ENCODE measurements at regions of chr6 and their contacts with region 1.

Region 1: DNA sequence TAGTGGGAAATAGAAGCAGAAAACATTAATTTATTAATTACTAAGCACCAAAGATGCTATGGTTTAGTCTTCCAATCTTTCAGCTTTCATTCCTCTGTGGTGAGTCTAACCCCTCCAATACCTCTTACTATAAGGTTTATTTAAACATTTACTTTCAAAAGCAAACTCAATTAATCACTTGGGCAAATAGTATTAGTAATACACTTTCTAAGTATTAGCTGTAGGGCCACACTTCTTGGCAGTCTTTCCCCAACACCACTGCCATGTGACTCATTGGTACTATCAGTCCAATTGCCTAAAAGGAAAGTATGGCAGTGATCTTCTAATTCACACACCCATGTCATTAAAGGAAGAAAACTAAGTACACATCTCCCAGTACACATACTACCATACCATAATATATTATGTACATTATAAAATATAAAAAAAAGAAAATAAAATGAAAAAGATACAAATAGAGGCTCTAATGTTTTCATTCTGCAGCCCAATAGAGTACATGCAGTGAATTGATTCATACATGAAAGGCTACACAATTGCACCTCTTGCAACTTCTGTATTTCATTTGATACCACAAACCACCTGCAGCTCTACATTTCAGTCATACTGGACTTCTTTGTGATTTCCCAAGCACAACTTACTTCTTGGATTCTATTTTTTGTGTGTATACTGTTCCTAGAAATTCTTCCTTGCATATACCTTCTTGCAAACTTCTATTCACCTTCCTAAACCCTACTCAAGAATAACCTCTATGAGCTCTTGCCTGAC is 218.6 kb downstream of the PKHD1 start:
- DNase-seq: no peak
- H3K4me3 ChIP-seq: no peak overlapping the region
- H3K27ac ChIP-seq: no peak overlapping the region
- H3K4me1 ChIP-seq: no peaks in the 10 kb centered on the region
- CTCF ChIP-seq: no peak

Region 2: GRCh38 chr6:51569594-51569993 is 299.2 kb before region 1 on chr6:
- CTCF ChIA-PET with region 1: no interaction called
- POLR2A ChIA-PET with region 1: no interaction called
- intact Hi-C with region 1: no loop called
- DNase-seq: no peak
- H3K4me3 ChIP-seq: no peak overlapping the region
- H3K27ac ChIP-seq: no peak overlapping the region
- H3K4me1 ChIP-seq: no peaks in the 10 kb centered on the region
- CTCF ChIP-seq: no peak

Region 3: GRCh38 chr6:51885957-51886356 is 17.2 kb after region 1 on chr6:
- CTCF ChIA-PET with region 1: no interaction called
- POLR2A ChIA-PET with region 1: interaction called, 12 read pairs
- intact Hi-C with region 1: no loop called
- DNase-seq: no peak
- H3K4me3 ChIP-seq: no peak overlapping the region
- H3K27ac ChIP-seq: no peak overlapping the region
- H3K4me1 ChIP-seq: no peaks in the 10 kb centered on the region
- CTCF ChIP-seq: no peak